HEK293 (cell line): ENCODE measurements at regions of chr16 and their contacts with region 1.

Region 1: DNA sequence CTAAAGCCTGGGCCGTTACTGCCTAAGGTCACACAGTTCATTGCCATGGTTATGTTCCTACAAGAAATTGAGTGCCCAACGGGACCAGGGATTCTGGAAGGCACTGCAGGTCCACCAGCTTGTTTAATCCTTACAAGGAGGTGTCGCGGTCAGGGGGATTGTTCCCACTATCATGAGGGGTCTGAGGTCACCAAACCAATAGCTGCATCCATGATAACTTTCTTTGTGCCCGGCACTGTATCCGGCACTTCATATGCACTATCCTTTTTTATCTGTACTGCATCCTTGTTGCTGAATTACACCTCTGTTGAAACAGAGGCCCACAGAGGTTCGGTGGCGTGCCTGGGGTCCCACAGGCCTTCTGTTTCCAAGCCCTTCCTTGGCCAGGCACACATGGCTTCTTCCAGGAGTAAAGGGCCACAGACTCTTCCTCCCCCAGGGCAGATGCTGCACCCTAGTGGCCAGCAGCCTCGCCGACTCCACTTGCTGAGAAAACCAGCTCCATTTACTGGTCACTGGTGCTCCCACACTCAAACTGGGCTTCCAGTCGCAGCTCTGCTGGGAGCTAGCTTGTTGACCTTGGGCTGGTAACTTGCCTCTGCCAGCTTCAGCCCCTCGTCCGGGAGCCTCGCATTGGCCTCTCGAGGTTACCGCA is 82.0 kb upstream of the PLCG2 start:
- H3K4me3 ChIP-seq: no peak overlapping the region
- H3K27ac ChIP-seq: no peak overlapping the region
- H3K4me1 ChIP-seq: no peaks in the 10 kb centered on the region
- CTCF ChIP-seq: peak; percentile 57

Region 2: GRCh38 chr16:81403616-81404373 is 293.3 kb before region 1 on chr16:
- CTCF ChIA-PET with region 1: interaction called, 10 read pairs
- POLR2A ChIA-PET with region 1: interaction called, 6 read pairs
- H3K4me3 ChIP-seq: peak overlapping the region; percentile 27
- H3K27ac ChIP-seq: no peak overlapping the region
- H3K4me1 ChIP-seq: no peaks in the 10 kb centered on the region; the same call in 1 of the 2 replicates
- CTCF ChIP-seq: peak; percentile 97

Region 3: GRCh38 chr16:81798311-81799137 is 101.4 kb after region 1 on chr16:
- CTCF ChIA-PET with region 1: no interaction called
- POLR2A ChIA-PET with region 1: no interaction called
- H3K4me3 ChIP-seq: no peak overlapping the region
- H3K27ac ChIP-seq: no peak overlapping the region
- H3K4me1 ChIP-seq: no peaks in the 10 kb centered on the region
- CTCF ChIP-seq: no peak